ENCODE measurements at regions of chr7 and their contacts with region 1.

Region 1: GRCh38 chr7:113414401-113415035 is 296.2 kb upstream of the SMIM30 start:
- DNase-seq: no peak
- H3K4me3 ChIP-seq: no peak overlapping the region
- H3K27ac ChIP-seq: no peak overlapping the region
- H3K4me1 ChIP-seq: no peaks in the 10 kb centered on the region
- H3K27me3 ChIP-seq: no peaks in the 10 kb centered on the region
- CTCF ChIP-seq: no peak

Region 2: DNA sequence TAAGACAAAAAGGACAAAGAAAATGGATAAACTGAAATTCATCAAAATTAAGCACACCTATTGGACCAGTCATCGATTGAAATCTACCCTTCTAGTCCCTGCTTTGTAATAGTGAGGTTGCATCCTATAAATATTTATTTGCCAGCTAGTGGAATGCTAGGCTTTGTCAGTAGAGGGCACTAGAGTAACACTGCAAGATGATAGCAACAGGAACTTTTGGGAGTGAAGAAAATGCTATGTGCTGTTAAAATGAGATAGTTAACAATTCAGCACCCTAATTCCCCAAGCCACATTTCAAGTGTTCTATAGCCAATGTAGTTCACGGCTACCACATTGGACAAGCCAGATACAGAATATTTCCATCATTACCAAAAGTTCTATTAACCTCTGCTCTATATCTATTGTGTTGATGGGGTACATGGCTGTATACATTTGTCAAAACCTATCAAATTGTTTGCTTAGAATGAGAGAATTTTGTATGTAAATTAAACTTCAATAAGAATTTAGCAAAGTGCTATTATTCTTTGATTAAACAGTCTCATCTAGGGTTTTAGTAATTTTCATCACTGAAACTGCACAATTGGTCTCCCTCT is 864.0 kb before region 1 on chr7:
- intact Hi-C with region 1: loop called (anchors 10 kb)
- DNase-seq: peak; percentile 55
- H3K4me3 ChIP-seq: no peak overlapping the region
- H3K27ac ChIP-seq: no peak overlapping the region
- H3K4me1 ChIP-seq: no peaks in the 10 kb centered on the region
- H3K27me3 ChIP-seq: no peaks in the 10 kb centered on the region
- CTCF ChIP-seq: peak; percentile 98

Region 3: DNA sequence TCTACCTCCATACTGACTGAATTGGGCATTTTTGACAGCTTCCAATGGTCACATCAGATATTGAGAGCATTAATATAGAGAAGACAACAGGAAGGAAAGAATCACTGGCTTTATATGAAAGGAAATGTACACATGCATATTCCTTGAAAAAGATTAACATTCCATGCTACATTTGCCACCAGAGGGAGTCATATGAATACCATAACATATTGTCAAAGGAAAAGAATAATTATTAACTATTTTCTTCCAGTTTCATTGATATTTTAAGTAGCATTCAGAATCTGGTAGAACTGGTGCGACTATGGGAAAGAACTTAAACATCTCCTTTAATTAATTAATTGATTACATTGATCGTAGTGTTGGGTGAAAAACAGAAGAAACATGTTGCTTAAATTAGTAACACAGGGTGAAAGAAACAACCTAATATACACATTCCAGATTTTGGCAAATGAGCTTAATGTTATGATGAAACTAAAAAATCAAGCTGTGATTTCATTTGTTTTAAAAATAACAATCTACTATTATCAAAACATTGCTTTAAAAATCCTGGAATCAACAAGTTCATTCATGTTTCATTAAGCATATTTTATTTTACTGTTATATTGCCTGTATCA is 399.4 kb before region 1 on chr7:
- intact Hi-C with region 1: loop called (anchors 10 kb)
- DNase-seq: no peak
- H3K4me3 ChIP-seq: no peak overlapping the region
- H3K27ac ChIP-seq: no peak overlapping the region
- H3K4me1 ChIP-seq: no peaks in the 10 kb centered on the region
- H3K27me3 ChIP-seq: no peaks in the 10 kb centered on the region
- CTCF ChIP-seq: no peak

Measured in colonic mucosa (tissue), 4 donors.